PC-3 (cell line): ENCODE measurements at regions of chr5 and their contacts with region 1.

Region 1: DNA sequence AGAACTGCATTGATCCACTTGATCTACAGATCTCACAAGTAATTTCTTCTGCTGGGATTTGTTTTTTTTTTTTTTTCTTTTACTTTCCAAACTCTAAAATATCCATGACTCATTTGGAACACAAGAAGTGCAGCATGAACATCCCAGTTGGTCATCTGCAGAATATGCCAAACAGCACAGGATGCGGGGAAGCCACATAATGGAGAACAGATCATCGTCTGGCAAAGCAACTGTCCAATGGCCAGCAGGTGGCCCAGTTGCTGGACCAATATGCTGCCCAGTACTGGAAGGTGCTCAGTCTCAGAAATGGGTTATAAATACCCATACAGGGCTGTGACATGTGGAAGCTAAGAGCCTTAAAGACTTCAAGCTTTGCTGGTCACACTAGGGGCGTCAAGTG is 221.3 kb upstream of the TAS2R1 start:
- DNase-seq: peak; percentile 92
- ATAC-seq: peak; percentile 72
- H3K4me3 ChIP-seq: no peak overlapping the region
- H3K27ac ChIP-seq: no peak overlapping the region
- H3K4me1 ChIP-seq: peaks cover 10% of the 10 kb centered on the region; the same call in 1 of the 2 replicates
- H3K27me3 ChIP-seq: 0 out of 2 replicates have a peak, but pooled peaks cover 5% of the 10 kb centered on the region
- CTCF ChIP-seq: peak; percentile 88

Region 2: GRCh38 chr5:9789818-9790217 is 61.6 kb before region 1 on chr5:
- CTCF ChIA-PET with region 1: no interaction called
- POLR2A ChIA-PET with region 1: no interaction called
- intact Hi-C with region 1: loop called (anchors 10 kb)
- DNase-seq: no peak
- ATAC-seq: no peak
- H3K4me3 ChIP-seq: no peak overlapping the region
- H3K27ac ChIP-seq: no peak overlapping the region
- H3K4me1 ChIP-seq: no peaks in the 10 kb centered on the region
- H3K27me3 ChIP-seq: no peaks in the 10 kb centered on the region
- CTCF ChIP-seq: no peak